Heart right ventricle (tissue), 16 donors: ENCODE measurements at regions of chr17 and their contacts with region 1.

Region 1: GRCh38 chr17:55391764-55392467 is 29.7 kb downstream of the MMD start:
- DNase-seq: no peak
- ATAC-seq: no peak
- H3K4me3 ChIP-seq: no peak overlapping the region
- H3K27ac ChIP-seq: no peak overlapping the region
- H3K4me1 ChIP-seq: peaks cover 0 to 14% (median 7%) of the 10 kb centered on the region in 9 donors
- H3K27me3 ChIP-seq: no peaks in the 10 kb centered on the region
- CTCF ChIP-seq: no peak

Region 2: GRCh38 chr17:55410722-55411462 is 19.0 kb after region 1 on chr17:
- intact Hi-C with region 1: loop called in 1 of 10 experiments (anchors 1 kb)
- DNase-seq: peak in 1 of 2 donors; percentile 42
- ATAC-seq: peak in 7 of 8 donors; percentile 44 to 86 (median 77)
- H3K4me3 ChIP-seq: no peak overlapping the region
- H3K27ac ChIP-seq: peak overlapping the region in 9 of 10 donors; percentile 15 to 50 (median 32)
- H3K4me1 ChIP-seq: peaks cover 0 to 24% (median 9%) of the 10 kb centered on the region in 9 donors
- H3K27me3 ChIP-seq: no peaks in the 10 kb centered on the region
- CTCF ChIP-seq: no peak